ENCODE measurements at regions of chr11 and their contacts with region 1.

Region 1: DNA sequence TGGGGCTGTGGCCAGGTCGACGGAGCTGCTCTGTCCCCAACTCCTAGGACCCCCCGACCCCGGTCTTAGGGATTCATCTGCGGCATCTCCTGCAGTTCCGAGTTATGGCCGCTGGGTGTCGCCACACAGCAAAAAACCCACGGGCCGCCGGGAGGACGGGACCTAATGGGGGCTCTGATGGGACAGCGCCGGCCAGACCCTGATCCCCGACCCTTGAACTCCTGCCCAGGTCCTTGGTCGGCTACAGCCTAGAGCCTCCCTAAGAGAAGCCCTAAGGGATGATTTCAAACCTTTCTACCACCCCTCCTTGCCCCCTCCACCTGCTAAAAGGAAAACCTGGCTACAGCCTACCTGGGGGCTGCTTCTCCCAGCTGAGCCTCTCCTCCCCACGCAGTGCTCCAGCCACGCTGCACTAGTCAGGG is 30.8 kb upstream of the LRRC10B start:
- DNase-seq: peak; percentile 47 to 94
- H3K4me3 ChIP-seq: no peak overlapping the region
- H3K27ac ChIP-seq: no peak overlapping the region
- H3K4me1 ChIP-seq: peaks cover 0 to 16% (median 8%) of the 10 kb centered on the region in 4 experiments; a peak in 5 of 7 replicates
- H3K27me3 ChIP-seq: no peaks in the 10 kb centered on the region
- CTCF ChIP-seq: peak; percentile 78 to 97 (median 89)
- EP300 ChIP-seq: no peak
- POLR2A ChIP-seq: no peak
- RAD21 ChIP-seq: peak; percentile 94 to 96

Region 2: DNA sequence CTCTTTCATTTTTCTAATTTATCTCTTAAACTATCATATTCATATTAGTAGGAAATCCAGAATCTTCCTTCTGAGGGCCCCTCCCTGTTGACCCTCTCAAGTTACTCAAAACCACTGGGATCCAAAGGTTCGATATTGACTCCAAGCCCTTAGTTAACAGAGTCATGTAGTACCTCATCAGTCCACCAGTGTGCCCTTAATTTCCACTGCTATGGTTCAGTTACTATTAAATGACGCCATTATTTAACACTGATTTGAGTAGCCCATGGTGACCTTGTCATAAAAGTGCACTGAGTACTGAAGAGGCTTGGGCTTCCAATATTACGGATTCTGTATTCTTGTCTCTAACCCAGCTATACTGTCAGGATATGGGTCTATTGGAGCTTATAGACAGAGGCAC is 870.3 kb before region 1 on chr11:
- CTCF ChIA-PET with region 1: no interaction called
- POLR2A ChIA-PET with region 1: no interaction called
- DNase-seq: no peak
- H3K4me3 ChIP-seq: no peak overlapping the region
- H3K27ac ChIP-seq: no peak overlapping the region
- H3K4me1 ChIP-seq: no peaks in the 10 kb centered on the region
- H3K27me3 ChIP-seq: no peaks in the 10 kb centered on the region
- CTCF ChIP-seq: peak in 1 of 3 experiments; percentile 42; a peak in 1 of 4 replicates
- EP300 ChIP-seq: no peak
- POLR2A ChIP-seq: no peak
- RAD21 ChIP-seq: no peak

Region 3: GRCh38 chr11:61361686-61362541 is 115.8 kb before region 1 on chr11 and contains the starts of genes CYB561A3 and TMEM138:
- CTCF ChIA-PET with region 1: no interaction called
- POLR2A ChIA-PET with region 1: no interaction called
- DNase-seq: peak; percentile 78 to 90
- H3K4me3 ChIP-seq: peak within 1 kb of the TSS; percentile 77 to 100 (median 86)
- H3K27ac ChIP-seq: peak within 1 kb of the TSS; percentile 100
- H3K4me1 ChIP-seq: no peaks in the 10 kb centered on the region
- H3K27me3 ChIP-seq: no peaks in the 10 kb centered on the region
- CTCF ChIP-seq: peak in 1 of 3 experiments; percentile 1; a peak in 1 of 4 replicates
- EP300 ChIP-seq: no peak
- POLR2A ChIP-seq: peak; percentile 94 to 99
- RAD21 ChIP-seq: no peak
- total RNA-seq, gene CYB561A3: 29.6 and 32.5 TPM in 2 replicates
- total RNA-seq, gene TMEM138: 32.9 and 35.3 TPM in 2 replicates

Region 4: GRCh38 chr11:61429691-61430582 is 47.8 kb before region 1 on chr11 and contains the starts of genes CPSF7 and SDHAF2:
- CTCF ChIA-PET with region 1: interaction called, 10 read pairs
- POLR2A ChIA-PET with region 1: interaction called, 9 read pairs
- DNase-seq: peak; percentile 82 to 98
- H3K4me3 ChIP-seq: peak within 1 kb of the TSS; percentile 76 to 94 (median 89)
- H3K27ac ChIP-seq: peak within 1 kb of the TSS; percentile 97
- H3K4me1 ChIP-seq: no peaks in the 10 kb centered on the region; a peak in 1 of 7 replicates
- H3K27me3 ChIP-seq: no peaks in the 10 kb centered on the region
- CTCF ChIP-seq: no peak
- EP300 ChIP-seq: 0 out of 3 replicates have a peak, but pooled peaks of 1 of the 2 experiments have one; percentile 24
- POLR2A ChIP-seq: peak; percentile 78 to 91
- RAD21 ChIP-seq: no peak
- total RNA-seq, gene CPSF7: 95.9 and 96.7 TPM in 2 replicates
- total RNA-seq, gene SDHAF2: 41.0 and 44.8 TPM in 2 replicates

Region 5: GRCh38 chr11:61460474-61460881 is 17.3 kb before region 1 on chr11:
- CTCF ChIA-PET with region 1: interaction called, 26 read pairs
- POLR2A ChIA-PET with region 1: interaction called, 5 read pairs
- DNase-seq: no peak
- H3K4me3 ChIP-seq: no peak overlapping the region
- H3K27ac ChIP-seq: no peak overlapping the region
- H3K4me1 ChIP-seq: no peaks in the 10 kb centered on the region
- H3K27me3 ChIP-seq: no peaks in the 10 kb centered on the region
- CTCF ChIP-seq: no peak
- EP300 ChIP-seq: no peak
- POLR2A ChIP-seq: no peak
- RAD21 ChIP-seq: no peak

Region 6: DNA sequence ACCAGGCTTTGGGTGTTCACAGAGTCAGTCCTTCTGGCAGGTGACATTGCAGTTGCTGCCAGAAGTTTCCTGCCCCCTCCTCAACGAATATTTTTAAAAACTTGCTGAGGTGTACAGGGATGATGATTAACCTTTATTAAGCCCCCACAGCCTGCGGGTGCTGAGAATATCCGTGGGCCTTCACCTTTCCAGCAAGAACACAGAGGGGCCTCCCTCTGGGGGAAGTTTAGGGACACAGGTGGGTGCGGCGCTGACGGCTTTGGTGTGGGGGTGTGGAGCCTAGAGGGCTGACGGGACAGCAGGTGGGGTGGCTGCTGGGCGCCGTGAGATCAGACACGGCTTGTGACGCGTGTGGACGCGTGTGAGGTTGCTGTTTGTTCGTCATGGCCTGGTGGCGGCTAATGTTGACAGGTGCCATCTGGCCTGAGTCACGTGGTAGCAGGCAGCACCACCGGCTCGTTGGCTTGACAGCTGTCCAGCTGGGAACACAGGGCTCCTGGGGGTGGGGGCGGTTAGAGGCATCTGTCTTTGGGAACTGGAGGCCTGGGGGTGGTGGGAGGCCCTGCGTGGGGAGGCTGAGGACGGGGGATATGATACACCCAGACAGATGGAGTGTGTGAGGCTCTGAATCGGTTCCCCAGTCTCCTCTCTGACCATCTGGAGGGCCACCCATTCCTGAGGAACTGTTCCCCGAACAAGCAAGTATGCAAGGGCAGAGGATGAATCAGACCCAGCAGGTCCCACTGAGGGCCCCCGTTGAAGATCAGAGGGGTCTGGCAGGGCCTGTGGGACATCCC is 18.3 kb after region 1 on chr11:
- CTCF ChIA-PET with region 1: interaction called, 2,106 read pairs
- POLR2A ChIA-PET with region 1: interaction called, 3 read pairs
- DNase-seq: no peak
- H3K4me3 ChIP-seq: no peak overlapping the region
- H3K27ac ChIP-seq: no peak overlapping the region
- H3K4me1 ChIP-seq: peaks cover 0 to 9% (median 6%) of the 10 kb centered on the region in 4 experiments; a peak in 5 of 7 replicates
- H3K27me3 ChIP-seq: peaks cover 0 to 8% (median 2%) of the 10 kb centered on the region in 4 experiments; a peak in 3 of 7 replicates
- CTCF ChIP-seq: no peak
- EP300 ChIP-seq: no peak
- POLR2A ChIP-seq: no peak
- RAD21 ChIP-seq: no peak

Region 7: GRCh38 chr11:61541598-61541997 is 63.9 kb after region 1 on chr11:
- CTCF ChIA-PET with region 1: interaction called, 2,106 read pairs
- POLR2A ChIA-PET with region 1: interaction called, 3 read pairs
- DNase-seq: no peak
- H3K4me3 ChIP-seq: no peak overlapping the region
- H3K27ac ChIP-seq: no peak overlapping the region
- H3K4me1 ChIP-seq: peaks cover 5 to 35% (median 18%) of the 10 kb centered on the region in 4 experiments
- H3K27me3 ChIP-seq: no peaks in the 10 kb centered on the region; a peak in 1 of 7 replicates
- CTCF ChIP-seq: no peak
- EP300 ChIP-seq: no peak
- POLR2A ChIP-seq: no peak
- RAD21 ChIP-seq: no peak

Region 8: DNA sequence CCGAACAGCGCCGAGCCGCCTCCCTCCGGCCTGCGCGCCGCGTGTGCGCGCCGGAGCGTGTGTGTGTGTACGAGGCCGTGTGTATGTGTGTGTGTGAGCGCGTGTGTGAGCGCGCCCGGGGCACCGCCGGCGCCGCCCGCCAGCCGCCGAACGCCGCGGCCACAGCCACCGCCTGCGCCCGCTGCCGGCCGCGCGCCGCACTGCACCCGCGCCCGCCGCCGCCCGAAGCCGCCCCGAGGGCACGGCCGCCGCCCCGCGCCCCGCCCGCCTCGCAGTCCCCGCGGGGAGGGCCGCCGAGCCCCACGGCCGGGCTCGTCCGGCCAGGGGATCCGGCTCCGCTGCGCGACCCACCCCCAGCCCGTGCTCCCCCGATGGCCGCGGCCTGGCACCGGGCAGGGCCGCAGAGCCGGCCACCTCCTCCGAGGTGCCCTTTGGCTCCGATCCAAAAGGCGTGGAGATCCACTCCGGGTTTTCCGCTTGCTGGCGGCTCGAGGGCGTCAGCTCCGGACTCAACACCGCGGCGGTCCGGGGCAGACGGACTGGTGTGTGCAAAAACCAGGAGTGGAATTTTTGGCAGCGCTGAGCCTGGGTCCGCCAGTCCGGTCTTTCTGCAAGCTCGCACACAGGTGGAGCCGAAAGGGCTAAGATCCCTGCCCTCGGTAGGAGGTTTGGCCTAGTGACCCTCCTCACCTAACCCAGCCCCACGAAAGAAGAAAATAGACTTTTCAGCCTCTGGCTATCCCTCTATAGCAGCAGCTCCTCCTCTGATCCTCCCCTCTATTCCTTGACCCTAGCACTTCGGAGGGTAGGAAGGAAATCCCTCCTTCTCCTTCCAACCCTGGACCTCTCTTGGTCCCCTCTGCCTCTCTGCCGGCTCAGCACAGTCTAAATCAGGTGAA is 103.5 kb after region 1 on chr11 and contains the start of gene SYT7:
- CTCF ChIA-PET with region 1: interaction called, 37 read pairs
- POLR2A ChIA-PET with region 1: no interaction called
- DNase-seq: peak; percentile 89 to 100
- H3K4me3 ChIP-seq: peak within 1 kb of the TSS; percentile 46 to 85 (median 64)
- H3K27ac ChIP-seq: no peak within 1 kb of the TSS
- H3K4me1 ChIP-seq: peaks cover 4 to 41% (median 31%) of the 10 kb centered on the region in 4 experiments
- H3K27me3 ChIP-seq: peaks cover 2 to 32% (median 26%) of the 10 kb centered on the region in 4 experiments
- CTCF ChIP-seq: peak in 1 of 3 experiments; percentile 9; a peak in 1 of 4 replicates
- EP300 ChIP-seq: peak in 1 of 2 experiments; percentile 67; a peak in 1 of 3 replicates
- POLR2A ChIP-seq: no peak
- RAD21 ChIP-seq: peak; percentile 1 to 9; a peak in 1 of 4 replicates
- total RNA-seq, gene SYT7: 10.5 and 10.6 TPM in 2 replicates

Measured in H1 (cell line).